ENCODE measurements at regions of chr7 and their contacts with region 1.

Region 1: GRCh38 chr7:17298207-17298839 is at the start of gene AHR:
- DNase-seq: peak; percentile 62
- ATAC-seq: peak; percentile 79
- H3K4me3 ChIP-seq: peak within 1 kb of the TSS; percentile 89
- H3K27ac ChIP-seq: peak within 1 kb of the TSS; percentile 61
- H3K4me1 ChIP-seq: peaks cover 6% of the 10 kb centered on the region; the same call in 1 of the 2 replicates
- H3K27me3 ChIP-seq: no peaks in the 10 kb centered on the region
- CTCF ChIP-seq: no peak
- EP300 ChIP-seq: no peak
- POLR2A ChIP-seq: peak; percentile 89
- RAD21 ChIP-seq: no peak
- polyA plus RNA-seq, gene AHR: 1.7 to 1.9 TPM

Region 2: DNA sequence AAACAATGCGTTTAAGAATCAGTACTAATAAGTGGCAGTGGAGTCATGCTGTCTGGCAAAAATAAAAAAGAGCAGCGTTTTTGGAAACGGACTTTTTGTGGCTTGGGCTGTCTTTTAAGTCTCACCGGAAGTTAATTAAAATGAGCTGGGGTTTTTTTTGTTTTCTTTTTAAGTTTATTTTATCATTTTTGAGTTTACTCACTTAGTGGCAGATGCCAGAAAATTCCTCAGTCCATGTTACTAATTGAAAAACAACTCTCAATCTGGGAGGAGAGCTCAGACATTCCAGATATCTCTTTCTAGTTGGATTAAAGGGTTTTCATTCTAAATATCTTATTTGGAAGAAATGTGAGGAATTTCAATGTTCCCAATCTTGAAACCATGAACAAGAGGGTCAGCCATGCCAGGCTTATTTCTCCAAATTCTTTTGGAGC is 282.7 kb before region 1 on chr7:
- CTCF ChIA-PET with region 1: interaction called, 24 read pairs
- POLR2A ChIA-PET with region 1: no interaction called
- RAD21 ChIA-PET with region 1: interaction called, 6 read pairs
- SMC1A ChIA-PET with region 1: interaction called, 16 read pairs
- in situ Hi-C with region 1: no loop called
- intact Hi-C with region 1: no loop called
- DNase-seq: no peak
- ATAC-seq: no peak
- H3K4me3 ChIP-seq: no peak overlapping the region
- H3K27ac ChIP-seq: no peak overlapping the region
- H3K4me1 ChIP-seq: no peaks in the 10 kb centered on the region
- H3K27me3 ChIP-seq: no peaks in the 10 kb centered on the region
- CTCF ChIP-seq: no peak
- EP300 ChIP-seq: no peak
- POLR2A ChIP-seq: no peak
- RAD21 ChIP-seq: no peak

Region 3: GRCh38 chr7:17159500-17160037 is 138.8 kb before region 1 on chr7:
- CTCF ChIA-PET with region 1: interaction called, 5 read pairs
- POLR2A ChIA-PET with region 1: interaction called, 8 read pairs
- RAD21 ChIA-PET with region 1: interaction called, 17 read pairs
- SMC1A ChIA-PET with region 1: interaction called, 9 read pairs
- in situ Hi-C with region 1: no loop called
- intact Hi-C with region 1: loop called (anchors 2 kb)
- DNase-seq: peak; percentile 77
- ATAC-seq: peak; percentile 91
- H3K4me3 ChIP-seq: no peak overlapping the region
- H3K27ac ChIP-seq: peak overlapping the region; percentile 9; the same call in 1 of the 2 replicates
- H3K4me1 ChIP-seq: peaks cover 14% of the 10 kb centered on the region
- H3K27me3 ChIP-seq: no peaks in the 10 kb centered on the region
- CTCF ChIP-seq: no peak
- EP300 ChIP-seq: peak; percentile 74 to 86; a peak in 3 of 4 replicates
- POLR2A ChIP-seq: no peak
- RAD21 ChIP-seq: 0 out of 2 replicates have a peak, but pooled peaks have one; percentile 7

Region 4: GRCh38 chr7:17402628-17403278 is 104.4 kb after region 1 on chr7:
- CTCF ChIA-PET with region 1: interaction called, 29 read pairs
- POLR2A ChIA-PET with region 1: interaction called, 3 read pairs
- RAD21 ChIA-PET with region 1: interaction called, 19 read pairs
- SMC1A ChIA-PET with region 1: interaction called, 23 read pairs
- in situ Hi-C with region 1: no loop called
- intact Hi-C with region 1: no loop called
- DNase-seq: peak; percentile 90
- ATAC-seq: peak; percentile 91
- H3K4me3 ChIP-seq: peak overlapping the region; percentile 49
- H3K27ac ChIP-seq: peak overlapping the region; percentile 77
- H3K4me1 ChIP-seq: peaks cover 23% of the 10 kb centered on the region
- H3K27me3 ChIP-seq: no peaks in the 10 kb centered on the region
- CTCF ChIP-seq: no peak
- EP300 ChIP-seq: peak; percentile 24 to 60; a peak in 3 of 4 replicates
- POLR2A ChIP-seq: no peak
- RAD21 ChIP-seq: no peak

Region 5: GRCh38 chr7:17625043-17625442 is 326.7 kb after region 1 on chr7:
- CTCF ChIA-PET with region 1: no interaction called
- POLR2A ChIA-PET with region 1: no interaction called
- RAD21 ChIA-PET with region 1: no interaction called
- SMC1A ChIA-PET with region 1: no interaction called
- in situ Hi-C with region 1: no loop called
- intact Hi-C with region 1: no loop called
- DNase-seq: no peak
- ATAC-seq: no peak
- H3K4me3 ChIP-seq: no peak overlapping the region
- H3K27ac ChIP-seq: no peak overlapping the region
- H3K4me1 ChIP-seq: no peaks in the 10 kb centered on the region
- H3K27me3 ChIP-seq: no peaks in the 10 kb centered on the region; a peak in 1 of 4 replicates
- CTCF ChIP-seq: no peak
- EP300 ChIP-seq: no peak
- POLR2A ChIP-seq: no peak
- RAD21 ChIP-seq: no peak

Region 6: GRCh38 chr7:17640730-17641377 is 342.5 kb after region 1 on chr7:
- CTCF ChIA-PET with region 1: interaction called, 17 read pairs
- POLR2A ChIA-PET with region 1: no interaction called
- RAD21 ChIA-PET with region 1: interaction called, 12 read pairs
- SMC1A ChIA-PET with region 1: interaction called, 9 read pairs
- in situ Hi-C with region 1: loop called (anchors 5 kb)
- intact Hi-C with region 1: no loop called
- DNase-seq: no peak
- ATAC-seq: peak; percentile 63
- H3K4me3 ChIP-seq: no peak overlapping the region
- H3K27ac ChIP-seq: no peak overlapping the region
- H3K4me1 ChIP-seq: no peaks in the 10 kb centered on the region
- H3K27me3 ChIP-seq: no peaks in the 10 kb centered on the region; a peak in 2 of 4 replicates
- CTCF ChIP-seq: peak; percentile 50 to 65 (median 62)
- EP300 ChIP-seq: no peak
- POLR2A ChIP-seq: no peak
- RAD21 ChIP-seq: peak; percentile 27; the same call in 1 of the 2 replicates

Measured in GM12878 (cell line).